ENCODE measurements at regions of chr3 and their contacts with region 1.

Region 1: DNA sequence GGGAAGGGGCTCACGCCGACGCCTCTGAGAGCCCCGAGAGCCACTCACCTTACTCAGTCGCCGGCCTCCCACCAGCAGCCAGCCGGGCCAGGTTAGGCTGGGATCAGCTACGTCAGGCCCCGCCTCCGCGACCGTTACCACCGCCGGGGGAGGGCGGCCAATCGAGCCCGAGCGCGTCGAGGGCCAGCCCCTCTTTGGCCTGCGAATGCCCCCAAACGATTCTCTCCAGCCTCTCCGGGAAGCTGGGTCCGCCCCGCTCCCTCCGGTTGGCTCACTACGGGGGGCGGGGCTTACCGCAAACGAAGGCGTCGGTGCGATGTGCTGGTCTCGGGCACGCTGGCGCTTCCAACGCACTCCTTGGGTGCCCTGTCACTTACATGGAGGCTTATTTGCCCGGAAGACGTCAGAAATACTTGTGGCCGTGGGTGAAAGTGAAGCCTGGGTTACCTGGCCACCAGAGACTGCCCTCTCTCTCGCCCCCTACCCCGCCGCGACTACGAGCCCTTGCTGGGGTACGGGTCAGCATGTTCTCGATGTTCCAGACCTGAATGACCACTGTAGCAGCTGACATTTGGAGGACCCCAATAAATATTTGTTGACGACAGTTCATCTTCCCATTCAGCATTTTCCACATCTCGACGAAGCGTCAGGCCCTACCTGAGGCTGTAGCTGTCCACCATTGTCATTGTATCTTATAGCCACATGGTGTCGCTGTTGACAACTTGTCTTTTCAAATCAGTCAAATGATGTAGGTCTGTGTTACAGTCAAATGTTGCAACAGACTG is at the start of gene CEP70:
- DNase-seq: peak; percentile 92
- H3K4me3 Mint-ChIP-seq: peak within 1 kb of the TSS; percentile 81
- H3K27ac Mint-ChIP-seq: peak within 1 kb of the TSS; percentile 86
- H3K4me1 Mint-ChIP-seq: peaks cover 3% of the 10 kb centered on the region
- H3K27me3 Mint-ChIP-seq: no peaks in the 10 kb centered on the region
- total RNA-seq, gene CEP70: 8.3 to 8.4 TPM

Region 2: DNA sequence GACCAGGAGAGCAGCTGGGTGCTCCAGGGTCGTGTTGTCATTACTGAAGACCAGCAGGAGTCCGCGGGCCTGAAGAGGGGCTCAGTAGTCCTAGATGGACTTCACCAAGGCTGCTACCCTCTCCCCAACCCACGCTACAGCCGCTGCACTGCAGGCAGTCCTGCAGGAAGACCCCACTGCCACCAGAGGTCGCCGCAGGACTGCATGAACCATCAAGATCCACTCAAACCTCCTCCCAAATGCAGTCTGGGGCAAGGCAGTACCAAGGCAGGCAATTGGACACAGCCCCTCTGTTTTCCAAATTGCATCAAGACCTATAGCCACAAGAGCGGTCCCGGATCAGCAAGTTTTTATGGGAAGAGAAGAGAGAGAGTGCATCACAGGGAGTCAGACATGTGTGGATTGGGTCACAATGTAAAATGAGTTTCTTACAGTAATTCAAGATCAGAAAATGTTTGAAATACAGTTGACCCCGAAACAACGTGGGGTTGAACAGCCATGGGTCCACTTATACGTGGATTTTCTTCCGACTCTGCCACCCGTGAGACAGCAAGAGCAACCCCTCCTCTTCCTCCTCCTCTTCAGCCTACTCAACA is 525.7 kb before region 1 on chr3:
- CTCF ChIA-PET with region 1: no interaction called
- POLR2A ChIA-PET with region 1: no interaction called
- intact Hi-C with region 1: loop called (anchors 5 kb)
- DNase-seq: peak; percentile 86
- H3K4me3 Mint-ChIP-seq: no peak overlapping the region
- H3K27ac Mint-ChIP-seq: no peak overlapping the region
- H3K4me1 Mint-ChIP-seq: peaks cover 14% of the 10 kb centered on the region
- H3K27me3 Mint-ChIP-seq: peaks cover 25% of the 10 kb centered on the region

Region 3: DNA sequence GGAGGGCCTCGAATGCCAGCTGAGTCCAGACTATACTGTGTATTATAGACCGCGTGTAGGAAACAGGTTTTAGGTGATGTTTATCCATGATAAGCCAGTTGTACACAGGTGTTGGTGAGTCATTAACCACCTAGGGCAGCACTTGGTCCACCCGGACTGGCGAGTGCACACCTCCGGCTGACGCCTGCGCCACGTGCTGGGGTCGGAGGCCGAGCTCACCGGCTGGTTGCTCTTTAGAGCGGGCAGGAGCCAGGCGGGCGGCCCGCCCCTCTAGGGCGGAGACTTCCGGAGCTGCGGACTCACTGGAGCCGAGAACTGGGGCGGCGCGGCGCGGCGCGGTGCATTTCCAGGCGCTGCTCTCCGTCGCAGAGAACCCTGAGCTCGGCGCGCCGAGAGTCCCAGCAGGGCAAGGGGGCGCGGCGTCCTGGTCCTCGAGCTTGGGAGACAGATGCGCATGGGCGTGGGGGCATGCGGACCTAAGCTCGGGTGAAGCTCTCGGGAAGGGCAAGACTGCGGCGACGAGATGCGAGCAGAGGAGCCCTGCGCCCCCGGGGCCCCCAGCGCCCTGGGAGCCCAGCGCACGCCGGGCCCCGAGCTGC is 160.0 kb before region 1 on chr3 and contains the start of gene ESYT3:
- CTCF ChIA-PET with region 1: interaction called, 5 read pairs
- POLR2A ChIA-PET with region 1: interaction called, 6 read pairs
- intact Hi-C with region 1: loop called (anchors 5 kb)
- DNase-seq: peak; percentile 80
- H3K4me3 Mint-ChIP-seq: peak within 1 kb of the TSS; percentile 69
- H3K27ac Mint-ChIP-seq: no peak within 1 kb of the TSS
- H3K4me1 Mint-ChIP-seq: peaks cover 10% of the 10 kb centered on the region
- H3K27me3 Mint-ChIP-seq: peaks cover 47% of the 10 kb centered on the region
- total RNA-seq, gene ESYT3: 0.17 to 0.19 TPM

Region 4: GRCh38 chr3:138578141-138578540 is 16.2 kb before region 1 on chr3:
- CTCF ChIA-PET with region 1: interaction called, 12 read pairs
- POLR2A ChIA-PET with region 1: interaction called, 5 read pairs
- intact Hi-C with region 1: loop called (anchors 2 kb)
- DNase-seq: no peak
- H3K4me3 Mint-ChIP-seq: no peak overlapping the region
- H3K27ac Mint-ChIP-seq: no peak overlapping the region
- H3K4me1 Mint-ChIP-seq: peaks cover 27% of the 10 kb centered on the region
- H3K27me3 Mint-ChIP-seq: no peaks in the 10 kb centered on the region

Region 5: DNA sequence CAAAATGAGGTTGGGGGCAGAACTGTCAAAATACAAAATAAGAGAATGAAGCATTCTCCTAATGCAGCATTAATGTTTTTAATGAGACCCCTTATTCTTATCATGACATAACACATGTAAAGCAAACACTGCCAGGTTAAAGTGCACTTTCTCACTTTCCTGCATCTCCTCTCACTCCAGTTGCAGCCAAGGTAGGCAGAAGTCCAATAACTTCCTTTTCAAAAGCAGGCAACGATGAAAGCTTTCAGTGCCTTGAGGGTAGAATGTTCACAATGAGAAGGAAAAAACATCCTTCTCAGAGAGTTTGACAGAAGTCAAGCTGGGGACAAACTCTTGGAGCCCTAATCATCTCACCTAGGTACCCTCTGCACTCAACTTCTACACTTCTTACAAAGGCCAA is 73.8 kb after region 1 on chr3:
- CTCF ChIA-PET with region 1: no interaction called
- POLR2A ChIA-PET with region 1: no interaction called
- intact Hi-C with region 1: no loop called
- DNase-seq: no peak
- H3K4me3 Mint-ChIP-seq: no peak overlapping the region
- H3K27ac Mint-ChIP-seq: no peak overlapping the region
- H3K4me1 Mint-ChIP-seq: no peaks in the 10 kb centered on the region
- H3K27me3 Mint-ChIP-seq: no peaks in the 10 kb centered on the region

Region 6: GRCh38 chr3:138781012-138781470 is 186.7 kb after region 1 on chr3:
- CTCF ChIA-PET with region 1: interaction called, 3 read pairs
- POLR2A ChIA-PET with region 1: no interaction called
- intact Hi-C with region 1: loop called (anchors 5 kb)
- DNase-seq: peak; percentile 58
- H3K4me3 Mint-ChIP-seq: no peak overlapping the region
- H3K27ac Mint-ChIP-seq: peak overlapping the region; percentile 28
- H3K4me1 Mint-ChIP-seq: peaks cover 25% of the 10 kb centered on the region
- H3K27me3 Mint-ChIP-seq: no peaks in the 10 kb centered on the region

Region 7: DNA sequence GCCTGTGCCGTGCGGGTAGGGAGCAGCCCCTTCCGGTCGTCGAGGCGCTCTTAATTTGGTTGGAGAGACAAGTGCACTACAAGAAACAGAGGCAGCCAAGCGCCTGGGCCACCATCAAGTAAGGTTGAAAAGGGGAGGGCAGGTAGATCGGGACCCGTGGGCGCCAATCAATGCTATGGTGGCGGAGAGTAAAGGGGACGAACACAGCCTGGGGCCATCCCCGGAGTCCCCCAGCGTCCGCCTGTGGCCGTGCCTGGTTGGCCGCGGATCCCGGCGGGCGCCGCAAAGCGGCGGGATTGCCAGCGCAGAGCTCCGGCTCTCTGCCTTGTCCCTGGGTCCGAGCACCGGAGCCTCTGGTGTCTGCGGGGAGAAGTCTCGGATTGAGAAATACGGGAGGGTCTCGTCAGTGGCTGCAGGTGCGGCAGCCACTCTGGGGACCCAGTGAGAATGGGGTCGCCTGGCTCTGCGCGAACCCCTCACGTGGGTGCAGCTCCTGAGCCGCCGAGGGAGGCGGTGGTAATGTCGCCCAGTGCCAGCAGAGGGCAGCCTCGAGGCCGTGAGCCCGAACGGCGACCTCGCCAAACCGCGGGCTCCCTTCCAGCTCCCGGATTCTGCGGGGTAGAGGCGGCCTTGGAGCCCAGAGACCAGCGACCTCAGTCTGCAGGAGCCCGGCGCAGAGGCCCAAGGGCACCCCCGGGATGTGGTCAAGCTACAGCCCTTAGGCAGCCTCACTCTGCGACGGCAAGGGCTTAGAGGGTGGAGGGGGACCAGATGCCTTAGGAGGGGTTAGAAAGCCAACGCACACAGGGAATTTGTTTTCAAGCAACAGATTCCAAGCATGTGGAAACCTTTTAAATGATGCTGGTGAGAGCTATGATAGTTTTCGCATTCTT is 341.8 kb after region 1 on chr3:
- CTCF ChIA-PET with region 1: interaction called, 13 read pairs
- POLR2A ChIA-PET with region 1: no interaction called
- intact Hi-C with region 1: no loop called
- DNase-seq: peak; percentile 80
- H3K4me3 Mint-ChIP-seq: peak overlapping the region; percentile 70
- H3K27ac Mint-ChIP-seq: no peak overlapping the region
- H3K4me1 Mint-ChIP-seq: peaks cover 30% of the 10 kb centered on the region
- H3K27me3 Mint-ChIP-seq: peaks cover 70% of the 10 kb centered on the region

Measured in activated CD4-positive, alpha-beta memory T cell treated with anti-CD3 and anti-CD28 coated beads for 36 hours (primary cell).